ENCODE measurements at regions of chr12 and their contacts with region 1.

Region 1: GRCh38 chr12:96258104-96258961 is 64.2 kb downstream of the ELK3 start:
- DNase-seq: no peak
- H3K4me3 Mint-ChIP-seq: no peak overlapping the region
- H3K27ac Mint-ChIP-seq: no peak overlapping the region
- H3K4me1 Mint-ChIP-seq: peaks cover 15% of the 10 kb centered on the region
- H3K27me3 Mint-ChIP-seq: no peaks in the 10 kb centered on the region

Region 2: DNA sequence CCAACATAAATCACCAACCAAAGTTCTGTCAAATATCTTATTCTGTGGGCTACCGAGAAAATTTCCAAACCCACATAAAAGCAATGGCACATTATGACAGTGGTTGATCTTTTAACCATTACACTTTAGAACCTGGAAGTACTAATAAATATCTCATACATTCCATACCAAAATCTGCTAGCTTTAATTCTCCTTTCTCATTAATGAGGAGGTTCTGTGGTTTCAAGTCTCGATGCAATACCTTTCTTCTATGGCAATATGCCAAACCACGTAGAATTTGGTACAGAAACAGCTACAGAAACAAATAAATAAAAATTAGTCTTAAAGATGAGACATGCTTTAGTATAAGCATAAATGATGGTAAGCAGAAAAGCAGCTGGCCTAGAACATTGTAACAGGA is 36.5 kb after region 1 on chr12:
- intact Hi-C with region 1: loop called (anchors 5 kb)
- DNase-seq: no peak
- H3K4me3 Mint-ChIP-seq: no peak overlapping the region
- H3K27ac Mint-ChIP-seq: no peak overlapping the region
- H3K4me1 Mint-ChIP-seq: no peaks in the 10 kb centered on the region
- H3K27me3 Mint-ChIP-seq: no peaks in the 10 kb centered on the region